Panc1 (cell line): ENCODE measurements at regions of chr1 and their contacts with region 1.

Region 1: DNA sequence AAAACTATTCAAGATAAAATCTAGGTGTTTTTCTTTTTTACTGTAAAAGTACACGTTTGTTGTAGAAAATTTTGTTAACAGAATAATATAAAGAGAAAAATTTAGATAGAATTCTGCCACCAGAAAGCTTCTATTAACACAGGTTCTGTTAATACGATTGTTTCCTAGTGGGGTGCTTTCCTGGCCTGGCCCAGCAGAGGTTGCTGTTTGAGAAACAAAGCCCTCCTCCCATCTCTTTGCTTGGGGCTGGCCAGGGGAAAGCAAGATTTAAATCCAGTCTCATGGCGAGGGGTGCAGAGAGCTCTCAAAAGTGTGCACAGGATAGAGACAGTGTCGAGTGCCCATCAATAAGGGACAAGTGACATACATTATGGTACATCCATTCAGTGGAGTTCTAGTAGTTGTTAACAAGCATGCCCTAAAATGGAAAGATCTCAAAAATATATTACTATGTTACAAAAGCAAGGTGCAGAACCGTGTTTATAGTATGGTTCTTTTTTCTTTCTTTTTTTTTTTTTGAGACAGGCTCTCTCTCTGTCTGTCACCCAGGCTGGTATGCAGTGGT is 14.6 kb upstream of the ACBD3 start:
- DNase-seq: no peak
- ATAC-seq: no peak
- H3K4me3 ChIP-seq: no peak overlapping the region
- H3K27ac ChIP-seq: no peak overlapping the region
- H3K4me1 ChIP-seq: no peaks in the 10 kb centered on the region
- H3K27me3 ChIP-seq: no peaks in the 10 kb centered on the region
- CTCF ChIP-seq: no peak; the same call in 1 of the 2 replicates

Region 2: GRCh38 chr1:225304996-225305395 is 896.1 kb before region 1 on chr1:
- CTCF ChIA-PET with region 1: no interaction called
- POLR2A ChIA-PET with region 1: no interaction called
- in situ Hi-C with region 1: no loop called
- intact Hi-C with region 1: no loop called
- DNase-seq: no peak
- ATAC-seq: no peak
- H3K4me3 ChIP-seq: no peak overlapping the region
- H3K27ac ChIP-seq: no peak overlapping the region
- H3K4me1 ChIP-seq: no peaks in the 10 kb centered on the region
- H3K27me3 ChIP-seq: no peaks in the 10 kb centered on the region
- CTCF ChIP-seq: no peak

Region 3: GRCh38 chr1:226121587-226122400 is 79.3 kb before region 1 on chr1:
- CTCF ChIA-PET with region 1: interaction called, 11 read pairs
- POLR2A ChIA-PET with region 1: no interaction called
- in situ Hi-C with region 1: no loop called
- intact Hi-C with region 1: loop called (anchors 2 kb)
- DNase-seq: no peak
- ATAC-seq: peak; percentile 85
- H3K4me3 ChIP-seq: peak overlapping the region; percentile 50 to 61
- H3K27ac ChIP-seq: peak overlapping the region; percentile 48; the same call in 1 of the 2 replicates
- H3K4me1 ChIP-seq: peaks cover 18% of the 10 kb centered on the region
- H3K27me3 ChIP-seq: no peaks in the 10 kb centered on the region
- CTCF ChIP-seq: peak; percentile 98

Region 4: GRCh38 chr1:226248091-226248490 is 47.0 kb after region 1 on chr1:
- CTCF ChIA-PET with region 1: interaction called, 13 read pairs
- POLR2A ChIA-PET with region 1: no interaction called
- in situ Hi-C with region 1: no loop called
- intact Hi-C with region 1: no loop called
- DNase-seq: no peak
- ATAC-seq: no peak
- H3K4me3 ChIP-seq: no peak overlapping the region
- H3K27ac ChIP-seq: no peak overlapping the region
- H3K4me1 ChIP-seq: no peaks in the 10 kb centered on the region
- H3K27me3 ChIP-seq: no peaks in the 10 kb centered on the region
- CTCF ChIP-seq: no peak